ENCODE measurements at regions of chr7 and their contacts with region 1.

Region 1: DNA sequence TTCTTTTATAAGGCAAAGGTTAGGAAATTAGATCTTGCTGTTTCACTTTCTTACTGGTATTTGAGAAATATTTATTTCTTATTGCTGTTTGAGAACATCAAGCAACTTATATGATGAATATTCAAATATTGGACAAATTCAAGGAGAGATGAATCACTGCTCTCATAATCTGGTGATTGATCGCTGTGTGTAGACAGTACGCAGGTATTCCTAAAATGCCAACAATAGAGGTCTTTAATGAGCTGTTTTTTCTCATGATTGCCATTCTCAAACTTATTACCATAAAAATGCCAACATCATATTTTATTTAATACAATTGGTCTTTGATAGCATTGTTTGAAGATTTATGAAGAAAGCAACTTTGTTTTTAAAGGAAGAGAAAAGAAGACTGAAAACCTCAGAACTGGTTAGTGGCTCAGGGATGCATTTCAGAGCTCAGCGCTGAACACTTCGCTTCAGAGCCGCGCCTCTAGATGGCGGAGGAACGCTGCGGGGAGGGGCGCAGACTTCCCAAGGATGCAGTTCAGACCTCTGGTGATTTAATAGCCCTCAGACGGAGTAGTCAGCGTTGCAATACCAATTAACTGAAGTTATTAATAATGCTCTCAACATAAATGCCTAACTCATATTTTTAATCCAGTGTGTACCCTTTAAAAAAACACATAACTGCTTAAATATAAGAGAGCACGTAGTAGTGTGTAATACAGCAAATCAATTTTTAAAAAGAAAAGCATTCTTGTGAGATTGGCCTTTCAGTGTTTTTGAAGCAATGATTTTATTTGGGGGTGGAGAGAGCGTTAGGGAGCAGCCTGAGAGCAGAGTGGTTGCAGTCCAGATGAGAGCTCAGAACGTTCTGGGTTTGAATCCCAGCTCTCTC is 38.5 kb upstream of the STEAP4 start:
- DNase-seq: peak; percentile 20
- ATAC-seq: peak; percentile 45
- H3K4me3 Mint-ChIP-seq: no peak overlapping the region
- H3K27ac Mint-ChIP-seq: no peak overlapping the region
- H3K4me1 Mint-ChIP-seq: no peaks in the 10 kb centered on the region
- H3K27me3 Mint-ChIP-seq: peaks cover 10% of the 10 kb centered on the region
- CTCF ChIP-seq: peak; percentile 20

Region 2: DNA sequence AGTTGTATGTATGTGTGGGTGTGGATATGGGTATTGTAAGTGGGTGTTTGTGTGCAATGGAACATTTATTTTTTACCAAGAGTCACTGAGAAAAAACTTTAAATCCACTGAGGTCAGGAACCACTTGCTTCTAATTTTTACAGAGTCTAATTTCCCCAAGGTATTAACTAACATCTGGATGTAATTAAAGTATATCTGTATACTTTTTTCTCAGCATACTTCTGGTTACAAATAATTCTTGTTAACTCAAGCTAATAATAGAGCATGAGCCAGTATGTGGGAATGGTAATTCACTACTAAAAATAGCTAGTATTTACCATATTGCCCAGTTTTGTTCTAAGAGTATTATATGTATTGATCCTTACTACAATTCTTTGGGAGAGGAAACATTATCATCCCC is 13.9 kb before region 1 on chr7:
- CTCF ChIA-PET with region 1: interaction called, 15 read pairs
- POLR2A ChIA-PET with region 1: no interaction called
- intact Hi-C with region 1: no loop called
- DNase-seq: no peak
- ATAC-seq: no peak
- H3K4me3 Mint-ChIP-seq: no peak overlapping the region
- H3K27ac Mint-ChIP-seq: no peak overlapping the region
- H3K4me1 Mint-ChIP-seq: no peaks in the 10 kb centered on the region
- H3K27me3 Mint-ChIP-seq: peaks cover 7% of the 10 kb centered on the region
- CTCF ChIP-seq: no peak

Region 3: DNA sequence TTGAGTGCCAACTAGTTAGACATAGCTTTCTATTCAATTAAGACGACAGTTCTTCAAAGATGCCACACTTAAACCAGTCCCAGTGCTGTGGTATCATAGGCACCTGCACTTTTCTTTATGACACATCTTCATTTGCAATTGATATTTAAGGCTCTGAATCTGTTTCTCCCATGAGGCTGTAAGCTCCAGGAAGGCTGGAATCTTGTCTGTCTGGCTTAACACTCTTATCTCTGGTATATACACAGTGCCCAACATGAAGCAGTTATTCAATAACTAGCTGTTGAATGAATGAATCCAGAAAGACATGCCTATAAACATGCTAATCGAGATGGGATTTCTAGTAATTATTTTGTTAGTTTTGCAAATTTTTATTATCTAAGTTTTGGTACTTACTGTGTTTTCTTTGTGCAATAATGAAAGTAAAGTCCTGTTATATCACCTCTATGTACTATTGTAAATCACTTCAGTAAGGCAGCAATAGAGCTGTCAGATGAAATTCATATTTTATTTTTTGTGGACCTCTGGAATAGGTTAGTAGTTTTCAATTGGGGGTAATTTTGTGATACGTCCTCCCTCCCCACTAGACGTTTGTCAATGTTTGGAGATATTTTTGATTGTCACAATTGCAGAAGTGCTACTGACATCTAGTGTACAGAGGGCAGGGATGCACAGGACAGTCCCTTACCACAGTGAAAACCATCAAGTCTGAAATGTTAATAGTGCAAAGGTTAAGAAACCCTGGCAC is 12.8 kb after region 1 on chr7:
- CTCF ChIA-PET with region 1: interaction called, 11 read pairs
- POLR2A ChIA-PET with region 1: no interaction called
- intact Hi-C with region 1: no loop called
- DNase-seq: no peak
- ATAC-seq: no peak
- H3K4me3 Mint-ChIP-seq: no peak overlapping the region
- H3K27ac Mint-ChIP-seq: no peak overlapping the region
- H3K4me1 Mint-ChIP-seq: no peaks in the 10 kb centered on the region
- H3K27me3 Mint-ChIP-seq: peaks cover 16% of the 10 kb centered on the region
- CTCF ChIP-seq: no peak

Region 4: DNA sequence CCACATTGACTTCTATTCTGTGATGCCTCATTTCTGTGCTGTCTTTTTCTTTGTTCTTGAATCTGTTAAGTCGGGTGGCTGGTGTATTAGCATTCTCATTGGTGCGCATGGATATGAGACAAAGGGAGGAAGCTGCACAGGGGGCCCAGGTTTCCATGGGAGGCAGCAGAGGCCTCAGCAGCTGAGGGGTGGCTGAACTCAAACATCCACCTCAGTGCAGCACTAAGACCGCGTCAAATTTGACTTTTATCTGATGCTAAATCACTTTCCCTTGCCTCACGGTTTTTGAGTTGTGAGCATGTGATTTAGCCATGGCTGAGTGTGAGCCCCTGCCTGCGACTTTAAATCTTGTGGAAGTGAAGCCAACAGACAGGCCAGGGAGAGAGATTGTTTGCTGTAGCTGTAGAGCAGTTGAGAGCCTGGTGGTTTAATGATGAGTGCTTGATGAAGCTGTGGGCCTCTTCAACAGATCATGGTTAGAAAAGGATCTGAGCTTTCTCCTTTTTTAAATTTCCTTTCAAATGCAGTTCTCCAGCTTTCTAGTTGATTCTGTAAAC is 221.1 kb after region 1 on chr7:
- CTCF ChIA-PET with region 1: no interaction called
- POLR2A ChIA-PET with region 1: no interaction called
- intact Hi-C with region 1: no loop called
- DNase-seq: no peak
- ATAC-seq: no peak
- H3K4me3 Mint-ChIP-seq: no peak overlapping the region
- H3K27ac Mint-ChIP-seq: no peak overlapping the region
- H3K4me1 Mint-ChIP-seq: no peaks in the 10 kb centered on the region
- H3K27me3 Mint-ChIP-seq: no peaks in the 10 kb centered on the region
- CTCF ChIP-seq: no peak